ENCODE measurements at regions of chr14 and their contacts with region 1.

Region 1: GRCh38 chr14:96501742-96502617 is at the start of gene PAPOLA:
- DNase-seq: peak; percentile 96
- ATAC-seq: peak; percentile 85
- H3K4me3 Mint-ChIP-seq: peak within 1 kb of the TSS; percentile 99
- H3K27ac Mint-ChIP-seq: peak within 1 kb of the TSS; percentile 97
- H3K4me1 Mint-ChIP-seq: peaks cover 64% of the 10 kb centered on the region
- H3K27me3 Mint-ChIP-seq: no peaks in the 10 kb centered on the region
- CTCF ChIP-seq: no peak
- total RNA-seq, gene PAPOLA: 205 and 255 TPM in 2 replicates

Region 2: DNA sequence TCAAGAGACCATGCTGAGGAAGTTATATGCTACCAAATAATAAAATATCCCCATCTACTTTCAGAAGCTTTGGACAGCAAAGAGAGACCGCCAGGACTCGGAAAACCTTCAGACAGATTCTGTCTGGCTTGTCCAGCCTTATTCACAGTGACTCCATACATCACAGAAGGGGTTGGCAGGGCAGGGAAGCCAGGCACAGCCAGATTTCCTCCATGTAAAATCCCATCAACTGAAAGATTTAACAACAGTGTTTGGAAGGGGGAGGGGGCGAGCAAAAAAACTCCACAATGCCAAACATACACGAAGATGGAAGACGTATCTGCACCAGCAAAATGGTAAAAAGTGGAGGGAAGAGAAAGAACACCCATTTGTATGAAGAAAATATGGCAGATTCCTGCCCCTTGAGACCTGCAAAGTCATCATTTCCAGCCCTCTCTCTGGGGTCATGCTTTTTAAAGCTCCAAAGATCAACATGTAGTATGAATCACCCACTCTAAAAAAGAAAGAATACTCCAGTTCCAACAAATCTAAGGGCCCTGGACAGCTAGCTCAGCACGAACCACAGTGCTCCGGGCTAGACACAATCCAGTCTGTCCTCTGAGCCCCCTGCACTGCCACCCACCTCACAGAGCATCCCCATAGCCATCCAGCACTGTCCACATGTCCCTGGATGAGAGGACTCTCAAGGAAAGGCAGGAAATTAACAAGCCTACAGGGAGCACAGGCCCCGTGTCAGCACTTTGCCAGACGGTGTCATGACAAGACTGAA is 1461.1 kb before region 1 on chr14:
- CTCF ChIA-PET with region 1: no interaction called
- POLR2A ChIA-PET with region 1: no interaction called
- intact Hi-C with region 1: no loop called
- DNase-seq: no peak
- ATAC-seq: no peak
- H3K4me3 Mint-ChIP-seq: no peak overlapping the region
- H3K27ac Mint-ChIP-seq: no peak overlapping the region
- H3K4me1 Mint-ChIP-seq: no peaks in the 10 kb centered on the region
- H3K27me3 Mint-ChIP-seq: peaks cover 23% of the 10 kb centered on the region
- CTCF ChIP-seq: no peak

Region 3: GRCh38 chr14:96146131-96146806 is 355.7 kb before region 1 on chr14:
- CTCF ChIA-PET with region 1: no interaction called
- POLR2A ChIA-PET with region 1: no interaction called
- intact Hi-C with region 1: no loop called
- DNase-seq: no peak
- ATAC-seq: no peak
- H3K4me3 Mint-ChIP-seq: no peak overlapping the region
- H3K27ac Mint-ChIP-seq: no peak overlapping the region
- H3K4me1 Mint-ChIP-seq: no peaks in the 10 kb centered on the region
- H3K27me3 Mint-ChIP-seq: peaks cover 10% of the 10 kb centered on the region
- CTCF ChIP-seq: no peak

Region 4: GRCh38 chr14:96362965-96363756 is 138.8 kb before region 1 on chr14 and contains the starts of genes ATG2B and GSKIP:
- CTCF ChIA-PET with region 1: no interaction called
- POLR2A ChIA-PET with region 1: interaction called, 5 read pairs
- intact Hi-C with region 1: loop called (anchors 1 kb)
- DNase-seq: peak; percentile 97
- ATAC-seq: peak; percentile 85
- H3K4me3 Mint-ChIP-seq: peak within 1 kb of the TSS; percentile 89
- H3K27ac Mint-ChIP-seq: peak within 1 kb of the TSS; percentile 63
- H3K4me1 Mint-ChIP-seq: peaks cover 40% of the 10 kb centered on the region
- H3K27me3 Mint-ChIP-seq: no peaks in the 10 kb centered on the region
- CTCF ChIP-seq: no peak
- total RNA-seq, gene ATG2B: 19.4 and 21.0 TPM in 2 replicates
- total RNA-seq, gene GSKIP: 11.4 and 15.3 TPM in 2 replicates

Region 5: DNA sequence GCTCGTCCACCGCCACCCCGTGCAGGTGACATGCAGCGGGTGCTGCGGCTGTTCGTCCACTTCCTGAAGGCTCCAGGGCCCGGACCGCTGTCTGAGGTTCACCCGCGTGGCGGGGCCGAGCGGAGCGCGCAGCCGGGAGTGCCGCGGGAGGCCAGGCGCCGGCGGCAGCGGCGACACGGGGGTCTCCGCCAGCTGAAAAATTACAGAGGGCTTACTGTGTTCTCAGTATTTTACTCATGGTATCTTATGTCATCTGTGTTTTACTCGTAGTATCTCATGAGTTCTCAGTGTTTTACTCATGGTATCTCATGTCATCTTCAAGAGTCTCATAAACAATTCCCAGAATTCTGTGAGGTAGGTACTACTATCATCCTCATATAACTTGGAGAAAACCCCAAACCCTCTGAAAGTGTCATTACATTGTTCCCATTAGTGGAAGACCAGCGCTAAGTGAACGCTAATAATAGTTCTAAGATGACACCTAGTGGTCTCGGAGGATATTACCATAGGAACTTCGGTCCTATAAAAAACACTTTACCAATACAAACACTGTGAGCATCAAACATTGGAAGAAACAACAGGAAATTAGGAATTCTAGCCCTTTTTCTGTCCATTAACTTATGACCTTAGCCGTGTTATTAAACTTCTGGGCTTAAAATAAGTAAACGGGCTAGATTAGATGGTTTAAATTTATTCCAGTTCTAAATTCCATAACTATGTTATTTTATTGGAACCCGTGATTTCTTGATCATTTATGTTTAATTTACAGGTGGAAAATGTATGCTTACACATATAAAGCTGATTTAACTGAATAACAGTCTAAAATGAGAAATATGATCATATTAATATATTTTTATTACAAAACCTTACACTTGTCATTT is 77.6 kb before region 1 on chr14:
- CTCF ChIA-PET with region 1: no interaction called
- POLR2A ChIA-PET with region 1: no interaction called
- intact Hi-C with region 1: loop called (anchors 1 kb)
- DNase-seq: peak; percentile 39
- ATAC-seq: peak; percentile 88
- H3K4me3 Mint-ChIP-seq: peak overlapping the region; percentile 79
- H3K27ac Mint-ChIP-seq: no peak overlapping the region
- H3K4me1 Mint-ChIP-seq: peaks cover 21% of the 10 kb centered on the region
- H3K27me3 Mint-ChIP-seq: peaks cover 2% of the 10 kb centered on the region
- CTCF ChIP-seq: peak; percentile 70

Region 6: DNA sequence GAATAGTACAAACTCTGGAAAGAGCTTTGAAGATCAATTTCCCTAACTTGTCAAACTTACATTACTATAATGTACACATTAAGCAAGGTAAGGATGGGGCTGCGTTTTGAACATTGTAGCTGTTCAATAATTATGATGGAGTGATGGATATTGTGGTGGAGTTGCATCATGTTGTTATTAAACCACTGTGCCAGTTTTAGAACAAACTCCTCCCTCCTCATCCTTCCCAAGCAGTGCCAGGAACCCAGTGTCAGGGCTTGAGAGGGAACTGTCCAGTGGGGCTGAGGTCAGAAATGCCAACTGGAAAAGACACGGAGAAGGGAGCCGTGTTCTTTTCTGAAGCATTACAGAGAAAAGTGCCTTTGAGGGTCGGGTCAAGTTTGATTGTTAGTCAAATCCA is 31.6 kb before region 1 on chr14:
- CTCF ChIA-PET with region 1: no interaction called
- POLR2A ChIA-PET with region 1: no interaction called
- intact Hi-C with region 1: no loop called
- DNase-seq: no peak
- ATAC-seq: no peak
- H3K4me3 Mint-ChIP-seq: no peak overlapping the region
- H3K27ac Mint-ChIP-seq: no peak overlapping the region
- H3K4me1 Mint-ChIP-seq: no peaks in the 10 kb centered on the region
- H3K27me3 Mint-ChIP-seq: peaks cover 2% of the 10 kb centered on the region
- CTCF ChIP-seq: no peak

Region 7: GRCh38 chr14:96512602-96513397 is 10.8 kb after region 1 on chr14:
- CTCF ChIA-PET with region 1: interaction called, 5 read pairs
- POLR2A ChIA-PET with region 1: interaction called, 13 read pairs
- intact Hi-C with region 1: loop called (anchors 1 kb)
- DNase-seq: no peak
- ATAC-seq: no peak
- H3K4me3 Mint-ChIP-seq: no peak overlapping the region
- H3K27ac Mint-ChIP-seq: peak overlapping the region; percentile 46
- H3K4me1 Mint-ChIP-seq: peaks cover 90% of the 10 kb centered on the region
- H3K27me3 Mint-ChIP-seq: no peaks in the 10 kb centered on the region
- CTCF ChIP-seq: no peak

Region 8: GRCh38 chr14:96538097-96538989 is 36.4 kb after region 1 on chr14:
- CTCF ChIA-PET with region 1: no interaction called
- POLR2A ChIA-PET with region 1: interaction called, 3 read pairs
- intact Hi-C with region 1: loop called (anchors 5 kb)
- DNase-seq: no peak
- ATAC-seq: no peak
- H3K4me3 Mint-ChIP-seq: no peak overlapping the region
- H3K27ac Mint-ChIP-seq: no peak overlapping the region
- H3K4me1 Mint-ChIP-seq: peaks cover 9% of the 10 kb centered on the region
- H3K27me3 Mint-ChIP-seq: no peaks in the 10 kb centered on the region
- CTCF ChIP-seq: no peak

Region 9: GRCh38 chr14:96564389-96564788 is 62.4 kb after region 1 on chr14:
- CTCF ChIA-PET with region 1: no interaction called
- POLR2A ChIA-PET with region 1: no interaction called
- intact Hi-C with region 1: no loop called
- DNase-seq: no peak
- ATAC-seq: no peak
- H3K4me3 Mint-ChIP-seq: no peak overlapping the region
- H3K27ac Mint-ChIP-seq: no peak overlapping the region
- H3K4me1 Mint-ChIP-seq: peaks cover 3% of the 10 kb centered on the region
- H3K27me3 Mint-ChIP-seq: no peaks in the 10 kb centered on the region
- CTCF ChIP-seq: no peak

Measured in activated B cell treated with CpG ODN at 0.5 μM for 24 hours (primary cell).